A549 (cell line): ENCODE measurements at regions of chr19 and their contacts with region 1.

Region 1: GRCh38 chr19:41883821-41884733 is 1.1 kb downstream of the ARHGEF1 start:
- DNase-seq: peak; percentile 100
- ATAC-seq: peak; percentile 78 to 97
- H3K4me3 ChIP-seq: peak overlapping the region; percentile 78
- H3K27ac ChIP-seq: peak overlapping the region; percentile 81 to 87
- H3K4me1 ChIP-seq: peaks cover 15% of the 10 kb centered on the region
- CTCF ChIP-seq: no peak; the same call in 2 of the 3 replicates
- EP300 ChIP-seq: peak in 1 of 2 experiments; percentile 53; a peak in 2 of 5 replicates
- POLR2A ChIP-seq: peak; percentile 73
- RAD21 ChIP-seq: no peak

Region 2: DNA sequence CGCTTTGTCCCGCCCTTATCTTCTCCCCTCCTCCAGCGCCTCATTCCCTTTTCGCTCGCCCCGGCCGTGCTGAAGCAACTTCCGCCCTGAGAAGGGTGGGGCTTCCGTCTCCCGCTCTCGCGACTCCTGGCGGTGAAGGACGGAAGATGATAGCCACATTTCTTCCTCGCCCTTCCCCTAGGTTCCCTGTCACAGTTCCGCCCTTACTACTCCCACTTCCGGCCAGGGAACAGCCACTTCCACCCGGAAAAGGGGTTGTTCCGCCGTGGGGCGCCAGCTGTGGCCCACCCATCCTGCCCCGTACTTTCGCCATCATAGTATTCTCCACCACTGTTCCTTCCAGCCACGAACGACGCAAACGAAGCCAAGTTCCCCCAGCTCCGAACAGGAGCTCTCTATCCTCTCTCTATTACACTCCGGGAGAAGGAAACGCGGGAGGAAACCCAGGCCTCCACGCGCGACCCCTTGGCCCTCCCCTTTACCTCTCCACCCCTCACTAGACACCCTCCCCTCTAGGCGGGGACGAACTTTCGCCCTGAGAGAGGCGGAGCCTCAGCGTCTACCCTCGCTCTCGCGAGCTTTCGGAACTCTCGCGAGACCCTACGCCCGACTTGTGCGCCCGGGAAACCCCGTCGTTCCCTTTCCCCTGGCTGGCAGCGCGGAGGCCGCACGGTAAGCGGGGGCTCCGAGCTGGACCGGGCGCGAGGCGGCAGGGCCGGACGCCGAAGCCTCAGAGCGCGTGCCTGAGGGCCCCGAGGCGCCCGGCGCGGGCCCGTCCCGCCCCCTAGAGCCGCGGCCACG is 24.3 kb before region 1 on chr19 and contains the start of gene RPS19:
- CTCF ChIA-PET with region 1: interaction called, 3 read pairs
- POLR2A ChIA-PET with region 1: interaction called, 23 read pairs
- DNase-seq: peak; percentile 100
- ATAC-seq: peak; percentile 86 to 92
- H3K4me3 ChIP-seq: peak within 1 kb of the TSS; percentile 89
- H3K27ac ChIP-seq: peak within 1 kb of the TSS; percentile 90 to 95
- H3K4me1 ChIP-seq: peaks cover 40% of the 10 kb centered on the region
- CTCF ChIP-seq: peak; percentile 56
- EP300 ChIP-seq: peak in 1 of 2 experiments; percentile 13; a peak in 1 of 5 replicates
- POLR2A ChIP-seq: peak; percentile 95
- RAD21 ChIP-seq: no peak; a peak in 1 of 5 replicates
- polyA plus RNA-seq, gene RPS19: 2,749 and 3,564 TPM in 2 replicates

Region 3: DNA sequence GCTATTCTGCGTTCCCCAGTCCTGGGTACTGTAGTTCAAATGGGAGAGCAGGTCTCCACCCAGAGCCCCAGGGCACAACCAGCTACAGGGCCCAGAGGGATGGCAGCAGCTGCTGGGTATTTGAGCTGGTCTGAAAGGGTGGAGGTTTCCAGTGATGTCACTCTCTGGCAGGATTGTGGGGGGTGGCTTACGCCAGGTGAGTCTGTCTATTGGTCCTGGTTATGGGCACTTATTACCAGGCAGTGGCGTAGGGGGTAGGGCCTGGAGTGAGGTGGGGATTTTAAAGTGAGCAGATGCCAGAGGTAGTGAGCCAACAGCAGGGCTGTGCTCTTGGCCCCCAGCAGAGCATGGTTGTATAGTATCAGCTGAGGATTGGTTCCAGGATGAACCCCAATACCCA is 17.8 kb before region 1 on chr19:
- CTCF ChIA-PET with region 1: interaction called, 4 read pairs
- POLR2A ChIA-PET with region 1: interaction called, 23 read pairs
- DNase-seq: no peak
- ATAC-seq: peak in 1 of 2 experiments; percentile 1; a peak in 3 of 6 replicates
- H3K4me3 ChIP-seq: no peak overlapping the region
- H3K27ac ChIP-seq: peak overlapping the region in 1 of 2 experiments; percentile 25; a peak in 2 of 6 replicates
- H3K4me1 ChIP-seq: peaks cover 91% of the 10 kb centered on the region
- CTCF ChIP-seq: no peak
- EP300 ChIP-seq: no peak
- POLR2A ChIP-seq: no peak
- RAD21 ChIP-seq: no peak

Region 4: GRCh38 chr19:41904118-41904870 is 20.2 kb after region 1 on chr19:
- CTCF ChIA-PET with region 1: interaction called, 18 read pairs
- POLR2A ChIA-PET with region 1: no interaction called
- DNase-seq: peak; percentile 79 to 94
- ATAC-seq: peak; percentile 20 to 70; a peak in 5 of 6 replicates
- H3K4me3 ChIP-seq: peak overlapping the region; percentile 7; the same call in 1 of the 3 replicates
- H3K27ac ChIP-seq: peak overlapping the region; percentile 42 to 78; a peak in 5 of 6 replicates
- H3K4me1 ChIP-seq: peaks cover 46% of the 10 kb centered on the region
- CTCF ChIP-seq: no peak
- EP300 ChIP-seq: no peak
- POLR2A ChIP-seq: no peak
- RAD21 ChIP-seq: no peak

Region 5: GRCh38 chr19:41934849-41935374 is 50.8 kb after region 1 on chr19:
- CTCF ChIA-PET with region 1: interaction called, 14 read pairs
- POLR2A ChIA-PET with region 1: no interaction called
- DNase-seq: peak; percentile 80 to 96
- ATAC-seq: peak; percentile 48 to 88
- H3K4me3 ChIP-seq: no peak overlapping the region
- H3K27ac ChIP-seq: no peak overlapping the region
- H3K4me1 ChIP-seq: 0 out of 3 replicates have a peak, but pooled peaks cover 3% of the 10 kb centered on the region
- CTCF ChIP-seq: peak; percentile 96
- EP300 ChIP-seq: no peak
- POLR2A ChIP-seq: no peak
- RAD21 ChIP-seq: peak; percentile 77 to 90

Region 6: DNA sequence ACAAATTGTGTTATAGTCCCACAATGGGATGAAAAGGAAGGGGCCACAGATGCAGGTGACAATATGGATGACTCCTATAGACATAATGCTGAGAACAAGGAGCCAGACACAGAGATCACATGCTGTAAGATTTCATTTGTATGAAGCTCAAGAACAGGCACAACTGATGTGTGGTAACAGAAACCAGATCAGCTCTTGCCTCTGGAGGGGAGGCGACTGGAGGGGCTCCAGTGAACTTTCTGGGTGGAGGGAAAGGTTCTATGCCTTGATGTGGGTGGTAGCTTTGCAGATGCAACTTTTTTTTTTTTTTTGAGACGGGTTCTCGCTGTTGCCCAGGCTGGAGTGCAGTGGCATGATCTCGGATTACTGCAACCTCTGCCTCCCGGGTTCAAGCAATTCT is 81.0 kb after region 1 on chr19:
- CTCF ChIA-PET with region 1: no interaction called
- POLR2A ChIA-PET with region 1: no interaction called
- DNase-seq: no peak
- ATAC-seq: no peak
- H3K4me3 ChIP-seq: no peak overlapping the region
- H3K27ac ChIP-seq: no peak overlapping the region
- H3K4me1 ChIP-seq: no peaks in the 10 kb centered on the region
- CTCF ChIP-seq: no peak
- EP300 ChIP-seq: no peak
- POLR2A ChIP-seq: no peak
- RAD21 ChIP-seq: no peak